Transverse colon (tissue), 4 donors: ENCODE measurements at regions of chr1 and their contacts with region 1.

Region 1: DNA sequence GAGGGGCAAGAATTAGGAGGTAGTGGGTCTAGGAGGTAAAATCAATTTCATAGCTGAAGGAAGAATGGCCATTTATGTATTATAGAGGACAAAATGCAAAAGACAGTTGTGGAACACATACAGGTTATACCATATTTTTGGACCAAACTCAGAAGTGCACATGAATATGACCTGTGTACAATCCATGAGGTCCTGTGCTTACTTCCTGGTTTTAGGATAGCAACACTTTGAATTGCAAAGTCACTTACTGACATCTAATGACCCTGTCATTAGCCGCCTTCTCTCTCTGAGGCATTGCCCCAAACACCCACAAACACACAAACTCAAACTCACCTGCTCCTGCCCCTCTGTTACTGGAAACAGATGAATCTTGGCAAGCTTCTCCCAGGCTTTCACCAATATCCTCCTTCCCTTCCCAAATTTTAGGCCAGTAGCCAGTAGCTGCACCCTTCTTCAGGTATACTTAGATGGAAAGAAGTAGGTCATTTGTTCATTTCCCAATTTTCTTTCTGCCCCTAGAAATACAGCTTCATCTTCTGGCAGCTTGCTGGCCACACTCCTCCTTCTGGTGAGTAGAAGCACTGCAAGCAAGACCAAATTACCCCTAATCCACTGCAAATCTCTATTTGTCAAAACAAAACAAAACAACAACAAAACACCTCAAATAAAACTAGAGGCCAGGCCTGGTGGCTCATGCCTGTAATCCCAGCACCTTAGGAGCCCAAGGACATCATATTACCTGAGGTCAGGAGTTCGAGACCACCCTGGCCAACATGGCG is 13.7 kb upstream of the RPL5 start:
- DNase-seq: no peak
- H3K4me3 ChIP-seq: no peak overlapping the region
- H3K27ac ChIP-seq: peak overlapping the region; percentile 57 to 77 (median 65)
- H3K4me1 ChIP-seq: peaks cover 0 to 20% (median 12%) of the 10 kb centered on the region in 4 donors
- H3K27me3 ChIP-seq: no peaks in the 10 kb centered on the region
- CTCF ChIP-seq: peak; percentile 64 to 87 (median 71)
- EP300 ChIP-seq: no peak
- POLR2A ChIP-seq: no peak

Region 2: DNA sequence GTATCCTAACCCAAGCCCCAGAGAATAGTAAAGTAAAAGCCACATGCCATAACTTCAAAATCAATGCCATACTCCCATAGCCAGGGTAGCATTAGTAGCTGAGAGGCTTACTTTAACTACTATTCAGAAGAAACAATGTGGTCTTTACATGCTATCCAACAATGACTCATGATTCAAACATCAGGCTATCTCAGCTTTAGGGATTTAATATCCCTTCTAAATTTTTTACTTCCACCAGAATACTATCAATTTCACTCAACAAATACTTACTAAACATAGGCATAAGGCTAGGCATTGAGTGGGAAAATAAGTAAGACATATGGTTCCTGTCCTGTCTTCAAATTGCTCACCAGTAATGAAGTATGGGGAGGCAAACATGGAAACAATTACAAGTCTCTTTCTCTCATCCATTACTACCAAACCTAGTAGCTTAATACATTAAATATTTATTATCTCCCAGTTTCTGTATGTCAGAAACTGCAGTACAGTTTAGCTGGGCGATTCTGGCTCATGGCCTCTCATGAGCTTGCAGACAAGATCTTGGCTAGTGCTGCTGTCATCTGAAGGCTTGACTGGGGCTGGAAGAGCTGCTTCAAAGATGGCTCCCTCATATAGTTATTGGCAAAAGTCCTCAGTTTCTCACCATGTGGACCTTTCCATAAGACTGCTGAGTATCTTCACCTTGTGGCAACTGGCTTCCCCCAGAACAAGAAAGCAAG is 64.0 kb before region 1 on chr1:
- in situ Hi-C with region 1: loop called in 1 of 4 experiments (anchors 10 kb)
- intact Hi-C with region 1: loop called (anchors 10 kb)
- DNase-seq: no peak
- H3K4me3 ChIP-seq: no peak overlapping the region
- H3K27ac ChIP-seq: no peak overlapping the region
- H3K4me1 ChIP-seq: peaks cover 0 to 7% (median 0%) of the 10 kb centered on the region in 4 donors
- H3K27me3 ChIP-seq: no peaks in the 10 kb centered on the region
- CTCF ChIP-seq: no peak
- EP300 ChIP-seq: no peak
- POLR2A ChIP-seq: no peak

Region 3: GRCh38 chr1:92882819-92883218 is 64.6 kb after region 1 on chr1:
- in situ Hi-C with region 1: no loop called
- intact Hi-C with region 1: no loop called
- DNase-seq: peak; percentile 21
- H3K4me3 ChIP-seq: no peak overlapping the region
- H3K27ac ChIP-seq: no peak overlapping the region
- H3K4me1 ChIP-seq: peaks cover 3 to 23% (median 6%) of the 10 kb centered on the region in 4 donors
- H3K27me3 ChIP-seq: no peaks in the 10 kb centered on the region
- CTCF ChIP-seq: no peak
- EP300 ChIP-seq: no peak
- POLR2A ChIP-seq: no peak

Region 4: GRCh38 chr1:92909321-92909720 is 91.1 kb after region 1 on chr1:
- in situ Hi-C with region 1: no loop called
- intact Hi-C with region 1: no loop called
- DNase-seq: no peak
- H3K4me3 ChIP-seq: no peak overlapping the region
- H3K27ac ChIP-seq: no peak overlapping the region
- H3K4me1 ChIP-seq: peaks cover 0 to 5% (median 0%) of the 10 kb centered on the region in 4 donors
- H3K27me3 ChIP-seq: no peaks in the 10 kb centered on the region
- CTCF ChIP-seq: no peak
- EP300 ChIP-seq: no peak
- POLR2A ChIP-seq: no peak

Region 5: GRCh38 chr1:93021539-93022134 is 203.5 kb after region 1 on chr1:
- in situ Hi-C with region 1: no loop called
- intact Hi-C with region 1: no loop called
- DNase-seq: no peak
- H3K4me3 ChIP-seq: no peak overlapping the region
- H3K27ac ChIP-seq: no peak overlapping the region
- H3K4me1 ChIP-seq: no peaks in the 10 kb centered on the region
- H3K27me3 ChIP-seq: no peaks in the 10 kb centered on the region
- CTCF ChIP-seq: peak; percentile 71 to 86 (median 80)
- EP300 ChIP-seq: no peak
- POLR2A ChIP-seq: no peak